Activated naive CD4-positive, alpha-beta T cell treated with anti-CD3 and anti-CD28 coated beads for 36 hours (primary cell): ENCODE measurements at regions of chr17 and their contacts with region 1.

Region 1: DNA sequence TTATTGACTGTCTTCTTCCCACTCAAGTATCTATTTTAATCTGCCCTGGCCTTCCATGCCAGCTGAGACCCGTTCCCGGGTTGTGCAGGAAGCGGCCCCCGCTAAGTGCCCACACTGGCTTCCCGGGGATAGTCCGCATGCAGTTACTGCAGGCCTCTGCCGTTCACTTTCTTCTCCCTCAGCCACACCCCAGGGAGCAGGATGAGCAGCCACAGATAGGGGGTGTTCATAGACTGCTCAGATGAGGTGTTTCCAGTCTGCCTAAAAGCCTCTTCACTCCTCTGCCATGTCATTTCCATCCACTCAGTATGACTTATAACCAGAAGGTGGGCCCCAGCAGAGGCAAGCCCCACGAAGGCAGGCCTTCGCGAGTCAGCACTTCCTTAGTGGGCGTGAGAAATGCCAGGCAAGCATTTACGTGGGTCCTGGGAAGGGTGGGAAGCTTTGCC is 7.7 kb downstream of the MED9 start:
- DNase-seq: peak; percentile 79
- H3K4me3 Mint-ChIP-seq: no peak overlapping the region
- H3K27ac Mint-ChIP-seq: peak overlapping the region; percentile 37
- H3K4me1 Mint-ChIP-seq: peaks cover 42% of the 10 kb centered on the region
- H3K27me3 Mint-ChIP-seq: no peaks in the 10 kb centered on the region

Region 2: GRCh38 chr17:17408236-17408794 is 76.2 kb before region 1 on chr17:
- CTCF ChIA-PET with region 1: no interaction called
- intact Hi-C with region 1: loop called (anchors 2 kb)
- DNase-seq: no peak
- H3K4me3 Mint-ChIP-seq: no peak overlapping the region
- H3K27ac Mint-ChIP-seq: no peak overlapping the region
- H3K4me1 Mint-ChIP-seq: peaks cover 48% of the 10 kb centered on the region
- H3K27me3 Mint-ChIP-seq: no peaks in the 10 kb centered on the region